ENCODE measurements at regions of chr11 and their contacts with region 1.

Region 1: DNA sequence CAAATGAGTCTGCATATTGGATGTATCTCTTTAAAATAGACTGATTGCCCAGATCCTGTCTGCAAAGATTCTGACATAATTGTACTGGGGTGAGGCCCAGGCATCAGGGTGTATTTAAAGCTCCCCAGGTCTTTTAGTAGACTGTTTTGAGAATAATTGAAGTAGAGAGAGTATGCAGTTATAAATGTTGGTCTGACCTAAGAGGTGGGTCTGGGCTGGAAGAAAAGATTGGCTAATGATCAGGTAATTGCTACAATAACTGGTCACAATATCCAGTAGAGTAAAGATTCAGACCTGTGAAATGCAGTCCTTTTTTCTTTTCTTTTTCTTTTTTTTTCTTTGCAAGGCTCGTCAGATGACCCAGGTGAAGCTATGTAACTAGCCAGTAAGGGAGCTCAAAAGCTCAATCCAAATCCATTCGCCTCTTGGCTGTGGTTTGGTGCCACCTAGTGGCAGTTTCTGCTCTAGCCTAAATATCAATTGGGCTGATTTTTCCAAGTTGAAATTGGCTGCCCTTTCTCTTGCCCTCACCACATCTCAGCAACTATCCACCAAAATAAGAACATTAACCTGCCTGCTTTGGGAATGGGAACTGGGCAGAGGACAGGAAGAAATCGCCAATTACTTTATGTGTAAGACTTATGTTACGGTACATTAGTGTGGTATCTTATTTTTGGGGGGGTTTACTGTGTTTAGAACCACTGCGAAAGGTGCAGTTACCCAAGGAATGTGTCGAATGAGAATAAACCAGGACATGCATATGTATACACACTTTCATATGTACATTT is 45.9 kb downstream of the ZNF143 start:
- DNase-seq: peak in 4 of 5 donors; percentile 57 to 70 (median 62)
- ATAC-seq: peak; percentile 15 to 86 (median 83)
- H3K4me3 ChIP-seq: no peak overlapping the region
- H3K27ac ChIP-seq: no peak overlapping the region
- H3K4me1 ChIP-seq: peaks cover 0 to 10% (median 3%) of the 10 kb centered on the region in 12 donors
- H3K27me3 ChIP-seq: no peaks in the 10 kb centered on the region
- CTCF ChIP-seq: peak; percentile 84 to 96 (median 92)
- POLR2A ChIP-seq: no peak

Region 2: GRCh38 chr11:9015677-9016076 is 491.0 kb before region 1 on chr11:
- intact Hi-C with region 1: loop called in 5 of 10 experiments (anchors 5 to 10 kb)
- DNase-seq: peak in 4 of 5 donors; percentile 48 to 61 (median 56)
- ATAC-seq: peak; percentile 41 to 83 (median 64)
- H3K4me3 ChIP-seq: no peak overlapping the region
- H3K27ac ChIP-seq: no peak overlapping the region
- H3K4me1 ChIP-seq: peaks cover 0 to 28% (median 17%) of the 10 kb centered on the region in 12 donors
- H3K27me3 ChIP-seq: no peaks in the 10 kb centered on the region
- CTCF ChIP-seq: peak; percentile 55 to 83 (median 74)
- POLR2A ChIP-seq: no peak

Region 3: DNA sequence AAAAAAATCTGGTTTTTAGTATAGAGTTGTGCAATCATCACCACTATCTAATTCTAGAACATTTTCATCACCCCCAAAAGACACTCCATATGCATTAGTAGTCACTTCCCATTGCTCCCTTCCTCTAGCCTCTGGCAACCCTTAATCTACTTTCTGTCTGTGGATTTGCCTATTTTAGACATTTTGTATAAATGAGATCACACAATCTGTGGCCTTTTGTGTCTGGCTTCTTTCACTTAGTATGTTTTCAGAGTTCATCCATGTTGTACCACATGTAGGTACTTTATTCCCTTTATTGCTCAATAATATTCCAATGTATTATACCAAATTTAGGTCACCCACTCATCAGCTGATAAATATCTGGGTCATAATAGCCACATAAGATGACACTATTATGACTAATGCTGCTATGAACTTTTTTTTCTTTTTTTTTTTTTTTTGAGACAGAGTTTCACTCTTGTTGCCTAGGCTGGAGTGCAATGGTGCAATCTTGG is 347.7 kb before region 1 on chr11:
- intact Hi-C with region 1: loop called in 3 of 10 experiments (anchors 10 kb)
- DNase-seq: no peak
- ATAC-seq: peak in 2 of 4 donors; percentile 62 to 85
- H3K4me3 ChIP-seq: no peak overlapping the region
- H3K27ac ChIP-seq: peak overlapping the region in 1 of 12 donors; percentile 51
- H3K4me1 ChIP-seq: peaks cover 0 to 26% (median 0%) of the 10 kb centered on the region in 12 donors
- H3K27me3 ChIP-seq: no peaks in the 10 kb centered on the region
- CTCF ChIP-seq: no peak
- POLR2A ChIP-seq: no peak

Region 4: DNA sequence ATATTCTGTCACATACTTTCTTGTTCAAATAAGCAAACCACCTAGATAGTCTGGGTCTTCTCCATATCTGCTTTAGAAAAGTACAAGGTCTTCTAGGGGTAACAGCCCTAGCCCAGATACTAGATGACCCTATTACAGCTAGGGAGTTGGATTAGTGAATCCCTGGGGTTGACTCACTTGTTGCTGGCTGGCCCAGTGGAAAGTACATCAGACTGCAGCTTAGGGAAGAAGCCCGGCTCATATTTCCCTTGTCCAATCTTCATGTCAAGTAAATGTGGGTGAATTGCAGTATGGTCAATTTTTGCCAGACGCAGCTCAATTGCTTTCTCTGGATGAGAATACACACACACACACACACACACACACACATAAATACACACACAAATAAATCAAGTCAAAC is 336.2 kb before region 1 on chr11:
- intact Hi-C with region 1: loop called in 3 of 10 experiments (anchors 10 kb)
- DNase-seq: no peak
- ATAC-seq: peak in 2 of 4 donors; percentile 56 to 74
- H3K4me3 ChIP-seq: no peak overlapping the region
- H3K27ac ChIP-seq: no peak overlapping the region
- H3K4me1 ChIP-seq: peaks cover 0 to 7% (median 0%) of the 10 kb centered on the region in 12 donors
- H3K27me3 ChIP-seq: no peaks in the 10 kb centered on the region
- CTCF ChIP-seq: no peak
- POLR2A ChIP-seq: no peak

Measured in heart left ventricle (tissue), 16 donors.